ENCODE measurements at regions of chr2 and their contacts with region 1.

Region 1: DNA sequence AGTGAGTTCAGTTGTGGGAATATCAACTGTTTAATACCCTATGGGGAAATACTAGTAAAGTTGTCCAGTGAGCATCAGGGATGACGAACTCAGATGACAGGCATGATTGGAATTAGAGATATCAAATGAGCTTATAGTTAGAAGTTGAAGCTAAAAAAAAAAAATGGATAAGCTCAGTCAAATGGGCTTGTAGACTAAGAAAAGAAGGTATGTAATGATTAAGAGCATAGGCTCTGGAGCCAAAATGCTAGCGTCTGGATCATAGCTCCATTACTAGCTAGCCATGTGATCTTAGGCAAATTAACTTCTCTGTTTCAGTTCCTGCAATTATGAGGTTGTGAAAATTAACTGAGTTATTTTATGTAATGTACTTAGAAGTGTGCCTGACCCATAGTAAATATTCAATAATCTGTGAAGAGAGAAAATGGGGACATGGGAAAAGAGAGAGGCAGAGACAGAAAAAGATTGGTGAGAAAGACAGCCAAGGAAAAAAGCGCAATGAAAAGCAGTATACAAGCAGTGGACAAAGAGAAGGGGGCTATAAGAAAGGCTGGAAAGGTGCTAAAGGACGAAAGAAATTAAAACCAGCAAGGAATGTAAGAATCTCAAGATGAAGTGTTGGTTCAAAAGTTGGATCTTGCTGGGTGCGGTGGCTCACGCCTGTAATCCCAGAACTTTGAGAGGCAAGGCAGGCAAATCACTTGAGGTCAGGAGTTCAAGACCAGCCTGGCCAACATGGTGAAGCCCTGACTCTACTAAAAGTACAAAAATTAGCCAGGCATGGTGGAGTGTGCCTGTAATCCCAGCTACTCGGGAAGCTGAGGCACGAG is 95.6 kb upstream of the SLC39A10 start:
- DNase-seq: peak; percentile 46
- H3K4me3 Mint-ChIP-seq: no peak overlapping the region
- H3K27ac Mint-ChIP-seq: peak overlapping the region; percentile 87
- H3K4me1 Mint-ChIP-seq: peaks cover 24% of the 10 kb centered on the region
- H3K27me3 Mint-ChIP-seq: no peaks in the 10 kb centered on the region
- CTCF ChIP-seq: no peak

Region 2: GRCh38 chr2:195486987-195487644 is 74.3 kb before region 1 on chr2:
- CTCF ChIA-PET with region 1: no interaction called
- POLR2A ChIA-PET with region 1: no interaction called
- intact Hi-C with region 1: no loop called
- DNase-seq: peak; percentile 73
- H3K4me3 Mint-ChIP-seq: no peak overlapping the region
- H3K27ac Mint-ChIP-seq: no peak overlapping the region
- H3K4me1 Mint-ChIP-seq: peaks cover 6% of the 10 kb centered on the region
- H3K27me3 Mint-ChIP-seq: no peaks in the 10 kb centered on the region
- CTCF ChIP-seq: no peak

Region 3: GRCh38 chr2:195575879-195576401 is 14.5 kb after region 1 on chr2:
- CTCF ChIA-PET with region 1: interaction called, 4 read pairs
- POLR2A ChIA-PET with region 1: interaction called, 22 read pairs
- intact Hi-C with region 1: no loop called
- DNase-seq: peak; percentile 85
- H3K4me3 Mint-ChIP-seq: peak overlapping the region; percentile 36
- H3K27ac Mint-ChIP-seq: peak overlapping the region; percentile 79
- H3K4me1 Mint-ChIP-seq: peaks cover 22% of the 10 kb centered on the region
- H3K27me3 Mint-ChIP-seq: no peaks in the 10 kb centered on the region
- CTCF ChIP-seq: no peak

Region 4: GRCh38 chr2:195642027-195642676 is 80.7 kb after region 1 on chr2:
- CTCF ChIA-PET with region 1: no interaction called
- POLR2A ChIA-PET with region 1: no interaction called
- intact Hi-C with region 1: no loop called
- DNase-seq: no peak
- H3K4me3 Mint-ChIP-seq: no peak overlapping the region
- H3K27ac Mint-ChIP-seq: no peak overlapping the region
- H3K4me1 Mint-ChIP-seq: no peaks in the 10 kb centered on the region
- H3K27me3 Mint-ChIP-seq: no peaks in the 10 kb centered on the region
- CTCF ChIP-seq: no peak